ENCODE measurements at regions of chr1 and their contacts with region 1.

Region 1: DNA sequence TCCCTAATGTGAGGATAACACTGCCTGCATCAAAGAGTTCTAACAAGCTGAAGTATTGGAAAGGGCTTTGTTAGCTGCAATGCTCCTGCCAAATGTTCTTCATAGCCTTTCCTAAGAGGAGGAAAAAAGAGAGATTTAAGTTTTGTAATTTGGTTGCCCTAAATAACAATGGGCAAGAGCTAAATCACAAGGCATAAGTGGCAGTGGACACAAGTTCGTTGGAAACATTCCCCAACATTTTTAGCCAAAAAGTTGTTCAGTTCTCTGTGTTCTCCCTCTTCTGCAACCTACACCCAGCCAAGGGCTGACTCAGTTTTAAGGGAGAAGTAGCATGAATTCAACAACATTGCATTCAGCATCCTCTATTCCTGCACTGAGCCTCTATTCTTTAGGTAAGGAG is 2.6 kb upstream of the UQCRHL start:
- DNase-seq: no peak
- CTCF ChIP-seq: no peak

Region 2: GRCh38 chr1:15994590-15995351 is 184.7 kb after region 1 on chr1:
- in situ Hi-C with region 1: loop called (anchors 10 kb)
- DNase-seq: peak; percentile 69
- CTCF ChIP-seq: peak; percentile 89

Region 3: DNA sequence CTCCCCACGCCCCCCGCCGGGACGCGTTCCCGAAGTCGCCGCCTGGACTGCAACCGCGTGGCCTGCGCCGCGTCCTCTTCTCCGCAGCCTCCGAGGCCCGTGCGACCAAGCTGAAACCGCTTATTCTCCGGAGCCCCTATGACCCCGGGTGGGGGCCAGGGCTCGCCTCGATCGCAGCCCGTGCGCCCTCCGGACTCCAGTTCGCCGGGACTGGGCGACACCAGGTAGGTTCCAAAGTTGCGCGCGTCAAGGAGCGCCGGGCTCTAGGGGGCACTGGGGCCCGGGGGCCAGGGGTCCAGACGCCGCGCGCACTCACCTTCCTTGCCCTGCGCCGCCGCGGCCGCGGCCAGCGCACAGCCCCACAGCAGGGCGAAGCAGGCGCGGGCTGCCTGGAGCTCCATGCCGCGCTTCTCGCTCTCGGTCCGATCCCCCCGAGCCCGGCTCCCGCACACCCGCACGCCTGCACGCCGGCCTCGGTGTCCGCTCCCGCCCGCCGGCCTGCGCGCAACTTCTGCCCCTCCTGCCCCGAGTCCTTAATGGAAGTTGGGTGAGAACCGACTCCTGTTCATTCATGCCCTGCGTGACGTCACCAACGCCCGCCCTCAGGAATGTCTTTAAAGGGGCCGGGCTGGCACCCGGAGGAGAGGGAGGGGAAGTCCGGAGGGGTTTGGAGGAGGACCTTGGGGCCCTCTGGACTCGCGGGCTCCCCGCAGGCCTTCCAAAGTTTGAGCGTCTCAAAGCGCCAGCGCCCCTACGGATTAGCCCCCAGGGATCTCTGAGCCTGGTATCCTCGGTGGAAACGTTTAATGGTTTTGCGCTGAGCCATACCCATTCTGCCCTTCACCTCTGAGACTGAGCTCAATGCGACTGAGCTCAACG is 345.7 kb after region 1 on chr1 and contains the start of gene EPHA2:
- in situ Hi-C with region 1: no loop called
- DNase-seq: no peak
- CTCF ChIP-seq: no peak

Measured in GM13977 (cell line).